ENCODE measurements at regions of chr21 and their contacts with region 1.

Region 1: GRCh38 chr21:45192332-45192731 is 95.4 kb downstream of the POFUT2 start:
- DNase-seq: no peak
- H3K4me3 ChIP-seq: no peak overlapping the region
- H3K27ac ChIP-seq: no peak overlapping the region
- H3K4me1 ChIP-seq: no peaks in the 10 kb centered on the region
- H3K27me3 ChIP-seq: no peaks in the 10 kb centered on the region
- CTCF ChIP-seq: peak; percentile 4 to 56 (median 56)
- EP300 ChIP-seq: no peak
- POLR2A ChIP-seq: no peak
- RAD21 ChIP-seq: peak; percentile 38 to 60

Region 2: DNA sequence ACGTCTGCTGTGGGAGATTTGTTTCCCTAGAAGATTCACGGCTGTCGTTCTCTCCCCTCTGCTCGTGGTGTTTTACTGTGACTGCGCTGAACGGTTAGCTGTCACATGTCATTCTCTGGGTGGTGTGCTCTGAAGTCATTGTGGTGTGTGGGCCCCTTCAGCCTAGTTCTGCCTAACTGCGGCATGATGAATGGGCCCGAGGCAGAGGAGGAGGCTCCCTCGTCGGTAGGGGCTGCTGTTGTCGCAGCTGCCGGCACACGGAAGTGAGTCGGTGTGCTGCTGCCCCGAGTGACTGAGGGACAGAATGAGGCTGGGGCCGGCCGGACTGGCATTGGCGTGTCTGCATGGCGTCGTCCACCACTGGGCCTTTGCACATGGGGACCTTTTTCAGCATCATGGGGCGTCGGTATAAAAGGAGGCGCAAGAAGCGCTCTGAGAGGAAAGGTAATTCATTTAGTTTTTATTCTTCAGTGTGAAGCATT is 40.0 kb before region 1 on chr21:
- CTCF ChIA-PET with region 1: no interaction called
- POLR2A ChIA-PET with region 1: no interaction called
- DNase-seq: peak; percentile 25 to 58
- H3K4me3 ChIP-seq: no peak overlapping the region
- H3K27ac ChIP-seq: no peak overlapping the region
- H3K4me1 ChIP-seq: no peaks in the 10 kb centered on the region; a peak in 1 of 7 replicates
- H3K27me3 ChIP-seq: peaks cover 0 to 2% (median 0%) of the 10 kb centered on the region in 4 experiments; a peak in 1 of 7 replicates
- CTCF ChIP-seq: peak; percentile 61 to 75 (median 66)
- EP300 ChIP-seq: no peak
- POLR2A ChIP-seq: no peak
- RAD21 ChIP-seq: peak; percentile 70 to 77

Region 3: GRCh38 chr21:45208618-45208934 is 16.2 kb after region 1 on chr21:
- CTCF ChIA-PET with region 1: interaction called, 12 read pairs
- POLR2A ChIA-PET with region 1: no interaction called
- DNase-seq: no peak
- H3K4me3 ChIP-seq: no peak overlapping the region
- H3K27ac ChIP-seq: no peak overlapping the region
- H3K4me1 ChIP-seq: no peaks in the 10 kb centered on the region
- H3K27me3 ChIP-seq: no peaks in the 10 kb centered on the region; a peak in 1 of 7 replicates
- CTCF ChIP-seq: no peak
- EP300 ChIP-seq: no peak
- POLR2A ChIP-seq: no peak
- RAD21 ChIP-seq: no peak

Region 4: GRCh38 chr21:45228171-45228641 is 35.9 kb after region 1 on chr21:
- CTCF ChIA-PET with region 1: no interaction called
- POLR2A ChIA-PET with region 1: no interaction called
- DNase-seq: no peak
- H3K4me3 ChIP-seq: no peak overlapping the region
- H3K27ac ChIP-seq: no peak overlapping the region
- H3K4me1 ChIP-seq: no peaks in the 10 kb centered on the region
- H3K27me3 ChIP-seq: no peaks in the 10 kb centered on the region
- CTCF ChIP-seq: no peak
- EP300 ChIP-seq: no peak
- POLR2A ChIP-seq: no peak
- RAD21 ChIP-seq: no peak